B cell (primary cell): ENCODE measurements at regions of chr4 and their contacts with region 1.

Region 1: GRCh38 chr4:38497121-38497520 is 166.9 kb upstream of the KLF3 start:
- DNase-seq: no peak
- ATAC-seq: no peak
- H3K4me3 ChIP-seq: no peak overlapping the region
- H3K4me3 Mint-ChIP-seq: no peak overlapping the region
- H3K27ac ChIP-seq: no peak overlapping the region
- H3K27ac Mint-ChIP-seq: no peak overlapping the region
- H3K4me1 ChIP-seq: no peaks in the 10 kb centered on the region
- H3K4me1 Mint-ChIP-seq: peaks cover under 1% of the 10 kb centered on the region
- H3K27me3 ChIP-seq: peaks cover 0 to 5% (median 3%) of the 10 kb centered on the region in 4 experiments
- H3K27me3 Mint-ChIP-seq: peaks cover 13% of the 10 kb centered on the region
- CTCF ChIP-seq: no peak

Region 2: DNA sequence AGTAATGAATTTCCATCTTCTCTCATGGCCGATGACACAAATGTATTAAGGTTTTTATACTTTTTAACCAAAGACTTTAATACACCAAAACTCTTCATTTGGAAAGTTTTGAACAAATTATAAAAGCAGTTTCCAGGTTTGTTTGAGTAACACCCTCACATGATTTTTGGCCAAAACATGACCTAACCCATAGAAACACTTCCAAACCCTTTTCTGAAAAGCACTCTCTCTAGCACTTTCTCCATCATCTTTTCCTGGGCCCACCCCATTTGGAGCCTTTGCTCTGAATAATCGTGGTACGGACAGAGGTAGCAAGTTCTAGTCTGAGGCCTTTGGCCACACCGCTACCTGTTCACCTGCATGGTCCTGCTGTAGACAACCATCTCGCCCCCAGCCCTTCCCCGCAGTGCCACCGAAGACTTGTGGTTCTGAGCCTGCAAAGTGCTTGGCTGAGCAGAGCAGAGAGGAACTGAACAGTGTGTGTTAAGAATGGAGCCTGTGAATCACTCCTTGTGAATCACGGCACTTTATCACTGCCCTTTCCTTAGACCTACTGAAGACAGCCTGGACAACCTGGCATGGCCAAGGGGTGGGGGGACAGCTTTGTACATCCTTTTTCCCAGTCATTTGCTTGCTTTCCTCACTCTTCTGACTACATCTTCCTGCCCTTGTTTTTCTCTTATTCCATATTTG is 355.2 kb before region 1 on chr4:
- CTCF ChIA-PET with region 1: no interaction called
- POLR2A ChIA-PET with region 1: no interaction called
- intact Hi-C with region 1: no loop called
- DNase-seq: no peak
- ATAC-seq: no peak
- H3K4me3 ChIP-seq: no peak overlapping the region
- H3K4me3 Mint-ChIP-seq: no peak overlapping the region
- H3K27ac ChIP-seq: no peak overlapping the region
- H3K27ac Mint-ChIP-seq: no peak overlapping the region
- H3K4me1 ChIP-seq: no peaks in the 10 kb centered on the region
- H3K4me1 Mint-ChIP-seq: no peaks in the 10 kb centered on the region
- H3K27me3 ChIP-seq: no peaks in the 10 kb centered on the region
- H3K27me3 Mint-ChIP-seq: no peaks in the 10 kb centered on the region
- CTCF ChIP-seq: no peak

Region 3: GRCh38 chr4:38509551-38509950 is 12.4 kb after region 1 on chr4:
- CTCF ChIA-PET with region 1: no interaction called
- POLR2A ChIA-PET with region 1: interaction called, 14 read pairs
- intact Hi-C with region 1: no loop called
- DNase-seq: peak; percentile 22
- ATAC-seq: no peak
- H3K4me3 ChIP-seq: no peak overlapping the region
- H3K4me3 Mint-ChIP-seq: peak overlapping the region; percentile 38
- H3K27ac ChIP-seq: no peak overlapping the region
- H3K27ac Mint-ChIP-seq: no peak overlapping the region
- H3K4me1 ChIP-seq: peaks cover 14 to 19% of the 10 kb centered on the region in 2 donors
- H3K4me1 Mint-ChIP-seq: peaks cover 38% of the 10 kb centered on the region
- H3K27me3 ChIP-seq: peaks cover 0 to 29% (median 18%) of the 10 kb centered on the region in 4 experiments
- H3K27me3 Mint-ChIP-seq: peaks cover 49% of the 10 kb centered on the region
- CTCF ChIP-seq: no peak